ENCODE measurements at regions of chr9 and their contacts with region 1.

Region 1: DNA sequence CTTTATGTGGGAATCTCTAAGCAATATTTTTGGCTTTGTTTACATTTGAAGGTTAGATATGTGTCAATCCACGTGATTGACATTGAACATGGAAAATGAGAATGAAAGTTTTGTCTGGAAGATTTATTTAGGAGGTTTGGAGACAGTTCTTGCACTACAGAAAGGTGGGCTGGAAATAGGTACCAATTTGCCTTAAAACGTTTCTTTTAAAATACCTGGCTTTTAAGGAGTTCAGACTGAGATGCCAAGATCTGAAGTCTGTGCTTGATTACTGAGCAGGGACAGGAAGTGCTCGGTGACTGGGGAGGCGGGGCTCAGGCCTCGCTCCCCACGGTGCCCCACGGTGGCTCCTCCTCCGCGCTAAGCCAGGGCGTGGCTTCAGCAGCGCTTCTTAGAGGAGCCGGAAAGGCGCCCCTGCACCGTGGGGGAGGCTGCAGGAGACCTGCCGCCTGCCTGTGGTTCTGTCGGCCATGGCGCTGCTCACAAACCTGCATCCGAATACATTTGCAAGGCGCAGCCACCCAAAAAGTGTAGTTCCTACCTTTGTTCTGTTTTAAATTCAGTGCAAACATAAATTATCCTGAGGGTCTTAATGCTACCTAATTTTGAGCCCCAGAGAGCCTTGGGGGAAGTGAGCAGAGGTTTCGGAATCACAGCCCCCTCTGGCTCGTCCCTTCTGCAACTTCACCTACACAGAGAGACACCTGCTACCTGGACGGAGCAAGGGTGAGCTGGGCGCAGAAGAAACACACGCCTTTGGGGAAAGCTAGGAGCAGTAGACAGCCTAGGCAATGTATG is 49.2 kb downstream of the USP20 start:
- DNase-seq: peak; percentile 98
- H3K4me3 Mint-ChIP-seq: peak overlapping the region; percentile 92
- H3K27ac Mint-ChIP-seq: peak overlapping the region; percentile 99
- H3K4me1 Mint-ChIP-seq: peaks cover 41% of the 10 kb centered on the region
- H3K27me3 Mint-ChIP-seq: no peaks in the 10 kb centered on the region

Region 2: DNA sequence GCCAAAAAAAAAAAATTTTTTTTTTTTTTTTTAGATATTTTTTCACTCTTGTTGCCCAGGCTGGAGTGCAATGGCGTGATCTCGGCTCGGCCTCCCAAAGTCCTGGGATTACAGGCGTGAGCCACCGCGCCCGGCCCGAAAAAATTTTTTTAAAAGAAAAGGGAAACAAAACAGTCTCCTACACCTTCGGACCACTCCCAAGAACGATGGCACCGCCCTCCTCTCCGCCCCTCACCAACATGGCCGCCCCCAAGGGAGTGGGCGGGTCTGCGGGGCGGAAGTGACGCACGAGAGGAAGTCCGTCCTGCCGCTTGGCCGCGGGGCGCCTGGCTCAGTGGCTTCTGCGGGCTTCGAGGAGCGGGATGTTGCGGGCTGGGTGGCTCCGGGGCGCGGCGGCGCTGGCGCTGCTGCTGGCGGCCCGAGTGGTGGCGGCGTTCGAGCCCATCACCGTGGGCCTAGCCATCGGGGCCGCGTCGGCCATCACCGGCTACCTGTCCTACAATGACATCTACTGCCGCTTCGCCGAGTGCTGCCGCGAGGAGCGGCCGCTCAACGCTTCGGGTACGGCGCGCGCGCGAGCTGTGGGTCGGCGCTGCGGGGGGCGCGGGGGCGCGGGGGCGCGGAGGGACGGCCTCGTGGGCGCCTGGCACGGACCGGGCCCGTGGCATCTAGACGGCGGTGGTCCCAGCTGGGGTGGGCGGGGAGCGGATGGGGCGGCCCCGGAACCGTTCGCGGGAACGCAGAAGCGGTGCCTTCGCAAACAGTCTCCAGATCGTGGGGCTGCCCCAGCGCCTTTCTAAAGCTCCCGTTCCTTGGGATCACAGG is 81.4 kb before region 1 on chr9 and contains the start of gene TOR1B:
- CTCF ChIA-PET with region 1: interaction called, 5 read pairs
- intact Hi-C with region 1: loop called (anchors 1 kb)
- DNase-seq: peak; percentile 96
- H3K4me3 Mint-ChIP-seq: peak within 1 kb of the TSS; percentile 84
- H3K27ac Mint-ChIP-seq: peak within 1 kb of the TSS; percentile 90
- H3K4me1 Mint-ChIP-seq: peaks cover 24% of the 10 kb centered on the region
- H3K27me3 Mint-ChIP-seq: no peaks in the 10 kb centered on the region
- total RNA-seq, gene TOR1B: 18.8 to 21.3 TPM

Region 3: DNA sequence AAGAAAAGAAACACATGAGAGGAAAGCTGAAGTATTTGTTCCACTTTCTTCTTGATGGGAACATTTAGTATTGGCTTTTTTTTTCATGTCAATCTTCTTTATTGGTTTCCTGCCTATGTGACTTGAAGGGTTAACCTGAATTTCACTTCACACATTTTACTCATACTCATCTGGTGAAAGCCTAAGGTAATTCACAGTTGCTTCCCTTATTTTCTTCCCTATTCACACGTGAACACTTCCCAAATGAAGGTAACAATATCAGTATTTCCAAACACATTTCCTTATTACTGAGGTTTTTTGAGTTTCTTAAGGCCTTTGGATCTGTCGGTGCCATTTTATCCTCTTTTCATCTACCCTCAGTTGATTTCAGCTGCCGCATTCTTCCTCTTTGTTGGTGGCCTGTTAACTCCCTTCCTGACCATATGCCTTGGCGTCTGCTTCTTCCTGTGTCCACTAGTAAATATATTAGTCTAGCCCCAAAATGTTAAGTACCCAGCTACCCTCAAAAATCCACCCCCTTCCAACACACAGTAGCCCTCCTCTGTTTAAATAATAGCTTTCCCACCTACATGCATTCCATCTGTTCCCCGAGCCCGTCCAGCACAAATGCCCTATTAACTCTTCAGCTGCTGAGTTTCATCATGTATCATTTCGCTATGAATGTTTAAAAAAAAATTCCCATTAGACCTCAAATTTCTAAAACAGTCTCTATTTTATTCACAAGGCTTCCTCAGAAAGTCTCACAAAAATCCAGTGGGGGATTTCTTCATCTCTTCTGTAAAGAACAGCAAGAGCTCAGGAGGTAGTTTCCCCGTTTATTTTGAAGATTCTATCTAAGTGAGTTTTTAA is 48.1 kb after region 1 on chr9:
- CTCF ChIA-PET with region 1: interaction called, 5 read pairs
- intact Hi-C with region 1: loop called (anchors 2 kb)
- DNase-seq: no peak
- H3K4me3 Mint-ChIP-seq: peak overlapping the region; percentile 25
- H3K27ac Mint-ChIP-seq: peak overlapping the region; percentile 84
- H3K4me1 Mint-ChIP-seq: peaks cover 50% of the 10 kb centered on the region
- H3K27me3 Mint-ChIP-seq: no peaks in the 10 kb centered on the region

Region 4: GRCh38 chr9:129988607-129989361 is 104.4 kb after region 1 on chr9:
- CTCF ChIA-PET with region 1: interaction called, 3 read pairs
- intact Hi-C with region 1: loop called (anchors 1 kb)
- DNase-seq: peak; percentile 61
- H3K4me3 Mint-ChIP-seq: peak overlapping the region; percentile 7
- H3K27ac Mint-ChIP-seq: peak overlapping the region; percentile 83
- H3K4me1 Mint-ChIP-seq: peaks cover 85% of the 10 kb centered on the region
- H3K27me3 Mint-ChIP-seq: no peaks in the 10 kb centered on the region

Region 5: GRCh38 chr9:130101915-130102314 is 217.5 kb after region 1 on chr9:
- CTCF ChIA-PET with region 1: interaction called, 24 read pairs
- intact Hi-C with region 1: loop called (anchors 1 kb)
- DNase-seq: no peak
- H3K4me3 Mint-ChIP-seq: no peak overlapping the region
- H3K27ac Mint-ChIP-seq: no peak overlapping the region
- H3K4me1 Mint-ChIP-seq: peaks cover 10% of the 10 kb centered on the region
- H3K27me3 Mint-ChIP-seq: no peaks in the 10 kb centered on the region

Region 6: GRCh38 chr9:130343445-130343918 is 459.1 kb after region 1 on chr9:
- CTCF ChIA-PET with region 1: no interaction called
- intact Hi-C with region 1: loop called (anchors 10 kb)
- DNase-seq: peak; percentile 58
- H3K4me3 Mint-ChIP-seq: no peak overlapping the region
- H3K27ac Mint-ChIP-seq: no peak overlapping the region
- H3K4me1 Mint-ChIP-seq: no peaks in the 10 kb centered on the region
- H3K27me3 Mint-ChIP-seq: no peaks in the 10 kb centered on the region